GM10248 (cell line): ENCODE measurements at regions of chr2 and their contacts with region 1.

Region 1: GRCh38 chr2:27249891-27250651 is 12.8 kb downstream of the SLC30A3 start:
- DNase-seq: peak; percentile 82
- CTCF ChIP-seq: peak; percentile 76

Region 2: GRCh38 chr2:27174316-27175040 is 75.6 kb before region 1 on chr2:
- CTCF ChIA-PET with region 1: no interaction called
- POLR2A ChIA-PET with region 1: no interaction called
- DNase-seq: no peak
- CTCF ChIP-seq: no peak

Region 3: DNA sequence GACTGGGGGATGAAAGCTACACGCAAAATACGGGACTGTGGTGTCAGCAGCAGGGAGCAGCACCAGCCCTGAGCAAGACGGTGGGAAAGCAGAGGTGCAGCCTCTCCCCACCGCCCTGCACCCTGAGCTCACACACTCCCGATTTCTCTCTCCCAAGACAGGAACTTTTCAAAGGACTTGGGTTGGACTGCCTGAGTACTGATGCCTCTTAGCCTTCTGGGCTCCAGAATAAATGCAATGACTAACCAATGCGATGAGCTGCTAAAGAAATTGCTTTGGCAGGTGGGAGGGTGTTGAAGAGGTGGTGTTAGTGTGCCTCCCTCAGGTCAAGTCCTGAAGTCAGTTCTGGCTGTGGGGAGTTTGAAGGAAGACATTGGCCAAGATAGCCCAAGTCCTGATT is 41.8 kb after region 1 on chr2:
- CTCF ChIA-PET with region 1: interaction called, 11 read pairs
- POLR2A ChIA-PET with region 1: no interaction called
- DNase-seq: no peak
- CTCF ChIP-seq: no peak